ENCODE measurements at regions of chr14 and their contacts with region 1.

Region 1: DNA sequence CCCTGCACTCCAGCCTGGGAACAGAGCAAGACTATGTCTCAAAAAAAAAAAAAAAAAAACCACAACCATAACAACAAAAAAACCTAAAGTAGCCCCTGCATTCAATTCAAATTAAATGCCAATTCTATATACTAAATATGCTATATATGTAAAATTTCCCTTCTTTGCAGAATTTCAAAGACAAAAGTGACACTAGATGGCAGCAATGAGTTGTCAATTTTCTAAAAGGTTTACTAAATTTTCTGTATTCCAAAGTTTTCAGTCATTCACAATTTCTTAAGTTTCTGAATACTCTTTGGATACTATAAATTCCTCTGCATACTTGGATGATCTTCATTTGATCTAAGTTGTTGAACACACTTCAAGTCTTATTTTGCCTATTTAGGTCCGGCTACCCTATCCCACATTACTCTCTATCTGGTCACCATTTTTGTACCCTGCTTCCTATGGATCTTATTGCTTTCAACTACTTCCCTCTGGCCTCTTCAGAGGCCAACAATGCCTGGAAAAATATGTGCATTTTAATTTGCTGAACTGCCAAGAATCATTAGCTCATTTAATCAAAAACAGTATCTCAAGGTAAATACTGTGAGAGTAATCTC is 27.9 kb downstream of the HNRNPC start:
- DNase-seq: no peak
- ATAC-seq: no peak
- H3K4me3 Mint-ChIP-seq: no peak overlapping the region
- H3K27ac Mint-ChIP-seq: no peak overlapping the region
- H3K4me1 Mint-ChIP-seq: peaks cover 53% of the 10 kb centered on the region
- H3K27me3 Mint-ChIP-seq: no peaks in the 10 kb centered on the region

Region 2: DNA sequence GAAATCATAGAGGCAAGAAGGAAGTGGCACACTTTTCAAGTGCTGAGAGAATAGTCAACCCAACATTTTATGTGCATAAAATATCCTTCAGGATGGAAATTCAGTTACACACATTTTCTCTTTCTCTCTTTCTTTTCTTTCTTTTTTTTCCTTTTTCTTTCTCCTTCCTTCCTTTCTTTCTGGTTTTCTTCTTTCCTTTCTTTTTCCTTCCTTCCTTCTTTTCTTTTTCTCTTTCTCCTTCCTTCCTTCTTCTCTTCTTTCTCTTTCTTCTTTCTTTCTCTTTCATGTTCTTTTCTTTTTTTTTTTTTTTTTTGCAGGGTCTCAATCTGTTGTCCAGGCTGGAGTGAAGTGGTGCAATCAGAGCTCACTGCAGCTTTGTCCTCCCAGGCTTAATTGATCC is 46.7 kb before region 1 on chr14:
- CTCF ChIA-PET with region 1: no interaction called
- POLR2A ChIA-PET with region 1: no interaction called
- DNase-seq: no peak
- ATAC-seq: no peak
- H3K4me3 Mint-ChIP-seq: no peak overlapping the region
- H3K27ac Mint-ChIP-seq: no peak overlapping the region
- H3K4me1 Mint-ChIP-seq: peaks cover 21% of the 10 kb centered on the region
- H3K27me3 Mint-ChIP-seq: peaks cover 8% of the 10 kb centered on the region

Region 3: GRCh38 chr14:21229821-21230220 is 11.5 kb before region 1 on chr14:
- CTCF ChIA-PET with region 1: interaction called, 22 read pairs
- POLR2A ChIA-PET with region 1: no interaction called
- DNase-seq: no peak
- ATAC-seq: peak; percentile 88
- H3K4me3 Mint-ChIP-seq: peak overlapping the region; percentile 54
- H3K27ac Mint-ChIP-seq: peak overlapping the region; percentile 90
- H3K4me1 Mint-ChIP-seq: peaks cover 65% of the 10 kb centered on the region
- H3K27me3 Mint-ChIP-seq: no peaks in the 10 kb centered on the region

Region 4: GRCh38 chr14:21257394-21257909 is 16.1 kb after region 1 on chr14:
- CTCF ChIA-PET with region 1: interaction called, 37 read pairs
- POLR2A ChIA-PET with region 1: interaction called, 4 read pairs
- DNase-seq: no peak
- ATAC-seq: peak; percentile 15
- H3K4me3 Mint-ChIP-seq: peak overlapping the region; percentile 40
- H3K27ac Mint-ChIP-seq: peak overlapping the region; percentile 77
- H3K4me1 Mint-ChIP-seq: peaks cover 67% of the 10 kb centered on the region
- H3K27me3 Mint-ChIP-seq: no peaks in the 10 kb centered on the region

Region 5: DNA sequence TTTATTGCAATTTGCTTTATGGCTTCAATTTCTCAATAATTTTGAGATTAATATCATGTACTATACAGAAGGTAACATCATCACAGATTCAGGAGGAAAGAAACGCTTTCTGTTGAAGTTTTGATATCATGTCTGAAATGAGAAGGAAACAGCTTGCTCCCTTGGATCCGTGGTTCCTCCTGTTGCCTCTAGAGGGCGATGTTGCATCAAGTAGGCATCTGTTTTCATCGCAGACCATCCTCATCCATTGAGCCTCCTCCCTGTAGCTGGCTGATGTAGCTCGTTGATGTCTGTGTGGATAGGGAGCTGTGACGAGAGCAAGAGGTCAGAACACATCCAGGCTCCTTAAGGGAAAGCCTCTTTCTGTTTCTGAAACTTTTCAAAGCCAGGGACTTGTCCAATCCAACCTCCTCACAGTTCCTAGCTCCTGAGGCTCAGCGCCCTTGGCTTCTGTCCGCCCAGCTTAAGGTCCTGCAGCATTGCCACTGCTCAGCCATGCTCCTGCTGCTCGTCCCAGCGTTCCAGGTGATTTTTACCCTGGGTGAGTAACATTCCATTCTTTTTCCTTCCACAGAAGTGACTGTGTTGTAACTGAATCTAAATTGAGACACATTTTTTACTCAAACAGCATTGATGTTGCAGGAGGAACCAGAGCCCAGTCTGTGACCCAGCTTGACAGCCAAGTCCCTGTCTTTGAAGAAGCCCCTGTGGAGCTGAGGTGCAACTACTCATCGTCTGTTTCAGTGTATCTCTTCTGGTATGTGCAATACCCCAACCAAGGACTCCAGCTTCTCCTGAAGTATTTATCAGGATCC is 737.1 kb after region 1 on chr14:
- CTCF ChIA-PET with region 1: no interaction called
- POLR2A ChIA-PET with region 1: no interaction called
- DNase-seq: peak; percentile 77
- ATAC-seq: peak; percentile 84
- H3K4me3 Mint-ChIP-seq: peak overlapping the region; percentile 69
- H3K27ac Mint-ChIP-seq: peak overlapping the region; percentile 53
- H3K4me1 Mint-ChIP-seq: peaks cover 23% of the 10 kb centered on the region
- H3K27me3 Mint-ChIP-seq: peaks cover 27% of the 10 kb centered on the region

Measured in activated CD8-positive, alpha-beta T cell treated with anti-CD3 and anti-CD28 coated beads, Interleukin-2, amount 10 ng/mL, durations not matched to agents 7 days and 5 days (primary cell).